Psoas muscle (tissue), 8 donors: ENCODE measurements at regions of chr5 and their contacts with region 1.

Region 1: DNA sequence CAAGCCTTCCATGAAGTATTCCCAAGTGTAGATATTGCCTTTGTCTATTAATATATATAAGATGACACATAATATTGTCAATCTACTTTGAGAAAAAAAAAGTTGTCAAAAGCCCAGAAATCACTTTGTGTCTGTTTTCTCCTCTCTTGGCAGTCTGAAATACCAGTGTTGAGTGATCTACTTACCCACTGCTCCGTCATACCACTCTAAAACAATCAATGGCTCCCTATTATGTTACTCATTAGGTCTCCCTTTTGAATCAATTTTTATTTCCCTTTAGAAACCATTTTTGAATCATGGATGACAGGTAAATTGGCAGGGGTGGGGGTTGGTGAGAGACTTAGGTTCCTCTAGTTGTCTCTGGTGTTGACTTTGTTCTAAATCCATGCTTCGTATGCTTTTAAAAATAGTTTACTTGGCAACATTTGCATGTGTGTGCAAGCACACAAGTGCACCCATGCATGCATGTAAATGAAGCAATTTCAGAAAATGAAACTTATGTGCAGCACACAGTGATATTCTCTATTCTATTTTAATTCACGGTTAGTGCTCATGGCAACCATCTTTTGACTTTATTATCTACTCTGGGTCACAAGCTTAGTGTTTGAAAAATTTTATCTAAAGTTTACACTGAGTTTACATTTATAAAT is 378.9 kb downstream of the RAB3C start:
- DNase-seq: no peak
- ATAC-seq: no peak
- H3K4me3 ChIP-seq: no peak overlapping the region
- H3K27ac ChIP-seq: no peak overlapping the region
- H3K4me1 ChIP-seq: no peaks in the 10 kb centered on the region
- H3K27me3 ChIP-seq: no peaks in the 10 kb centered on the region
- CTCF ChIP-seq: no peak

Region 2: DNA sequence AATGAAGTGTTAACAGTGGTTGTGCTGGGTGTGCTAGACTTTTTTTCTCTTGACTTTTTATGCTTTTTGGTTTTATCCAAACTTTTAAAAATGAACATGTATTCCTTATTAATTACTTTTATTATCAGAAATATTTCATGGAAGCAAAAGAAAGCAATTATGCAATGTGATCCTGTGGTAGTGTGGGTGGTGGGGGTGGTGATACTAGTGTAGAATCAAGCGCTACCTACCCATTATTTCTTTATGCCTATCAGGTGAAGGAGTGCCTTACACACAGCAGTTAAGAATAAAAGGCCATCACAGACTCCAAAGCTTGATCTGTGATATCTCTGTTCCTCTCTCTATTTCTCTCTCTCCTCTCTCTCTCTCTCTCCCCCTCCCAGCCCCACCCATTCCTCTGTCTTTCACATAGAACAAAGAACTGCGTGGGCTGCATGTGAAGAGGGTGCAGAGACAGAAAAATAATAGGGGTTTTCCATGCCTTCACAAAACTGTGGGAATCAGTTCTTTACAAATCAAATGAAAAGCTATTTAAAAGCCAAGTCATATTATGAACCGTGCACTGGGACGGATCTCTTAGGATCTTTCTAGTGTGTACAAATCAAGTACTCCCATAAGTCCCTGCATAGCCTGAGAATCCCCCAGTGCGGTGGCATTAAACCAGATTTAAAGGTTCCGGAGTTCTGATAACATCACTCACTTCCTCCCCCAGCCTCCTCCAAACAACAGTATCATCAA is 27.7 kb before region 1 on chr5:
- intact Hi-C with region 1: loop called in 1 of 2 experiments (anchors 5 kb)
- DNase-seq: no peak
- ATAC-seq: no peak
- H3K4me3 ChIP-seq: no peak overlapping the region
- H3K27ac ChIP-seq: no peak overlapping the region
- H3K4me1 ChIP-seq: no peaks in the 10 kb centered on the region
- H3K27me3 ChIP-seq: no peaks in the 10 kb centered on the region
- CTCF ChIP-seq: no peak

Region 3: GRCh38 chr5:59174248-59174844 is 212.6 kb after region 1 on chr5:
- intact Hi-C with region 1: no loop called
- DNase-seq: no peak
- ATAC-seq: peak; percentile 34 to 64 (median 52)
- H3K4me3 ChIP-seq: no peak overlapping the region
- H3K27ac ChIP-seq: peak overlapping the region; percentile 12
- H3K4me1 ChIP-seq: peaks cover 31% of the 10 kb centered on the region
- H3K27me3 ChIP-seq: no peaks in the 10 kb centered on the region
- CTCF ChIP-seq: peak; percentile 79